OCI-LY7 (cell line): ENCODE measurements at regions of chr3 and their contacts with region 1.

Region 1: GRCh38 chr3:183635431-183636220 is at the start of gene KLHL24:
- DNase-seq: peak; percentile 94
- H3K4me3 ChIP-seq: peak within 1 kb of the TSS; percentile 92
- H3K27ac ChIP-seq: peak within 1 kb of the TSS; percentile 80
- H3K4me1 ChIP-seq: peaks cover 24% of the 10 kb centered on the region
- CTCF ChIP-seq: 0 out of 2 replicates have a peak, but pooled peaks have one; percentile 24
- total RNA-seq, gene KLHL24: 37.8 and 45.8 TPM in 2 replicates

Region 2: DNA sequence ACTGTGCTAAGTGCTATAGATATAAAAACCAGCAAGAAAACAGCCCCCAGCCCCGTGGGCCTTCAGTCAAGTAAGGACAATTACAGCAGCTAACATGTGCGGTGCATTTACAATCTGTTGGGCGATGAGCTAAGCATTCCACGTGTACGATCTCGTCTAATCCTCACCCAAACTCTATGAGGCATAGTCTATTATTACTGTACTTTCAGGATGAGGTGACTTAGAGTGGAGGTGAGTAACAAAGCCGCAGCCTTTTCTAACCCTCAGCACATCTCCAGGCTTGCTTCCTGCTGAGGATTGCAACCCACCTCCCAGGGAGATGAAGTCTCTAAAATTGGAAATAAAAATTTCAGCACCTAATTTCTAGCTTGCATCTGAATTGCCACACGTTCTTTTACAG is 154.0 kb before region 1 on chr3:
- CTCF ChIA-PET with region 1: no interaction called
- POLR2A ChIA-PET with region 1: interaction called, 7 read pairs
- intact Hi-C with region 1: loop called (anchors 5 kb)
- DNase-seq: no peak
- H3K4me3 ChIP-seq: no peak overlapping the region
- H3K27ac ChIP-seq: no peak overlapping the region
- H3K4me1 ChIP-seq: peaks cover 44% of the 10 kb centered on the region
- CTCF ChIP-seq: no peak

Region 3: DNA sequence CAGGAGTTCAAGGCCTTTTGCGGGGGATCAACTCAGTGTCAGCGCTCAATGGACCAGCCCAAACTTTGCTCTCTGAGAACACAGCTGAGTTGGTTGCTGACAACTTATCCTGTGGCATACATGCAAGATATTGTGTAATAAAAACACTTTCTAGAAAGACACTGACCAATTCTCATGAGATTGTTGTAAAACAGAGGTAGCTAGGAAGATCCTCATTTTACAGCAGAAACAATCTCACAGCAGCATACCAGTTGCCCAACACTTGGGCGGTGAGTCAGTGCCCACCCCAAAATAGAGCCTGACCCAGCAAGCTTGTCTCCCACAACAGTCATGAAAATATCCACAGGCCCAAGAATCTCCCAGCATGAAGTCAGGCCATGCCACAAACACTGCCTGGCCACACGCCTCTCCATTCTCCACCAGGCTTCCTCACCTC is 98.3 kb before region 1 on chr3:
- CTCF ChIA-PET with region 1: no interaction called
- POLR2A ChIA-PET with region 1: interaction called, 4 read pairs
- intact Hi-C with region 1: loop called (anchors 5 kb)
- DNase-seq: no peak
- H3K4me3 ChIP-seq: peak overlapping the region; percentile 57
- H3K27ac ChIP-seq: peak overlapping the region; percentile 74
- H3K4me1 ChIP-seq: peaks cover 98% of the 10 kb centered on the region
- CTCF ChIP-seq: no peak

Region 4: GRCh38 chr3:183576487-183577107 is 59.0 kb before region 1 on chr3:
- CTCF ChIA-PET with region 1: interaction called, 3 read pairs
- POLR2A ChIA-PET with region 1: interaction called, 20 read pairs
- intact Hi-C with region 1: loop called (anchors 2 kb)
- DNase-seq: peak; percentile 97
- H3K4me3 ChIP-seq: peak overlapping the region; percentile 47
- H3K27ac ChIP-seq: peak overlapping the region; percentile 94
- H3K4me1 ChIP-seq: peaks cover 96% of the 10 kb centered on the region
- CTCF ChIP-seq: no peak

Region 5: DNA sequence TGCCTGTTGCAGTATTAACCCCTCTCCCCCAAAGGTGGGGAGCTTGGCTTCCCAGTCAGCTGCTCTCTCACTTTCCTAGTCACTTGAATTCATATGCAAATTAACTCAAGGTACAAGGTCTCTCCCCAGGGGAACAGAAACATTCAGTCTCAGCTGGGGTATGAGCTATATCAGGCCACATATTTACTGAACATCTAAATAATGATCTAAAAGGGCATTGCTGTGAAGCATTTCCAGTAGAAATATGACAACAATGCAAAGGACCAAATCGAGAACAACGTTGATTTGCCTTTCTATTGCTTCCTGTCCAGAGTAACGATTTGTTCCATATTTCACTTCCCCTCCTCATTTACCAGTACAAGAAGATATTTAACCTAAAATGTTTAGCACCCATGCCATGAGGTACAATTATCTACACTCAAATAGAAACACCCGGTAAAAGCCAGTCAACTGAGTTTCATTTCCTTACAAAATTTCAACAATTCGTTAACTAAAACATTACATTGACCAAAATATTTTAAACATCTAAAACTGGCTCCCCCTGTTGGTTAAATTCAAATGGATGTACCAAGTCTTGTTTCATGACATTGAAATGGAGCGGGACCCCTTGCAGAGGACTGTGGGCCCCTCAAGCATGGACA is 43.6 kb before region 1 on chr3:
- CTCF ChIA-PET with region 1: interaction called, 10 read pairs
- POLR2A ChIA-PET with region 1: interaction called, 31 read pairs
- intact Hi-C with region 1: loop called (anchors 1 kb)
- DNase-seq: peak; percentile 95
- H3K4me3 ChIP-seq: peak overlapping the region; percentile 57
- H3K27ac ChIP-seq: peak overlapping the region; percentile 98
- H3K4me1 ChIP-seq: peaks cover 84% of the 10 kb centered on the region
- CTCF ChIP-seq: peak; percentile 90

Region 6: DNA sequence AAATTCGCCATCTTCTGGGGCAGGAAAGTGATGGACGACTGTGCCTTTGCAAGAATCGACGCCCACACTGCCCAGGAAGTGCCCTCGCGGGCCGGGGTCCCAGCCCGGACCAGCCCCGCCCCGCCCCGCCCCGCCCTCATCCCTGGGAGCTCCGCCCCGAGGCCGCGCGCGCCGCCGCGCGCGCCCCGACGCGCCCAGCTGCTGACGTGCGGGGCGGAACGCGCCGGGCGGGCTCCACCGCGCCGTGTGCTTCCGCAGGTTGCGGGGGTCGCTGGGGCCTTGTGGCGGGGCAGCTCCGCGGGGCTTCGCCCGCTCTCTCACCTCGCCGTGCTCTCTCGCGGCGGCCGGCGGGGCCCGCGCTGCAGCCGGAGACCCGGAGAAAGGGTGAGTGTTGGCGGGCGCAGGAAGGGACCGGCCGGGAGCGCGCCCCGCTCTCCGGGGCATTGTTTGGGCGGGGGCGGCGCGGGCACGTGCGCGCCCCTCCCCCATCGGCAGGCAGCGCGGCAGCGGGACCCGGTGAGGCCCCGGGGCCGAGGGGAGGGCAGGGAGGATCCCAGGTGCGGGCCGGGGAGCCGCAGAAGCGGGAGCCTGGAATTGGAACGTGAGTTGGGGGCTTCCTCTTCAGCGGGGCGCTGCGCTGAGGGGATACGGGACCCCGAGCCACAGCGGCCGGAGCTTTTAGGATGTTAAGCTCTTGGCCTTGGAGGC is 62.1 kb after region 1 on chr3 and contains the start of gene YEATS2:
- CTCF ChIA-PET with region 1: interaction called, 3 read pairs
- POLR2A ChIA-PET with region 1: interaction called, 14 read pairs
- intact Hi-C with region 1: loop called (anchors 1 kb)
- DNase-seq: peak; percentile 86
- H3K4me3 ChIP-seq: peak within 1 kb of the TSS; percentile 96
- H3K27ac ChIP-seq: peak within 1 kb of the TSS; percentile 83
- H3K4me1 ChIP-seq: peaks cover 17% of the 10 kb centered on the region
- CTCF ChIP-seq: no peak
- total RNA-seq, gene YEATS2: 50.7 and 68.2 TPM in 2 replicates